H1 (cell line): ENCODE measurements at regions of chr9 and their contacts with region 1.

Region 1: GRCh38 chr9:77463151-77463550 is 185.0 kb downstream of the GNA14 start:
- DNase-seq: no peak
- H3K4me3 ChIP-seq: no peak overlapping the region
- H3K27ac ChIP-seq: no peak overlapping the region
- H3K4me1 ChIP-seq: peaks cover 0 to 6% (median 2%) of the 10 kb centered on the region in 4 experiments; a peak in 4 of 7 replicates
- H3K27me3 ChIP-seq: no peaks in the 10 kb centered on the region
- CTCF ChIP-seq: no peak
- EP300 ChIP-seq: no peak
- POLR2A ChIP-seq: no peak
- RAD21 ChIP-seq: no peak

Region 2: GRCh38 chr9:77475641-77476473 is 12.7 kb after region 1 on chr9:
- CTCF ChIA-PET with region 1: interaction called, 72 read pairs
- POLR2A ChIA-PET with region 1: no interaction called
- DNase-seq: no peak
- H3K4me3 ChIP-seq: no peak overlapping the region
- H3K27ac ChIP-seq: no peak overlapping the region
- H3K4me1 ChIP-seq: no peaks in the 10 kb centered on the region
- H3K27me3 ChIP-seq: no peaks in the 10 kb centered on the region
- CTCF ChIP-seq: peak in 1 of 3 experiments; percentile 14; a peak in 1 of 4 replicates
- EP300 ChIP-seq: no peak
- POLR2A ChIP-seq: no peak
- RAD21 ChIP-seq: no peak